ENCODE measurements at regions of chr13 and their contacts with region 1.

Region 1: GRCh38 chr13:27712421-27712820 is 79.9 kb upstream of the GSX1 start:
- DNase-seq: peak; percentile 39
- ATAC-seq: peak; percentile 40; the same call in 1 of the 2 replicates
- H3K4me3 ChIP-seq: no peak overlapping the region
- H3K27ac ChIP-seq: no peak overlapping the region
- H3K4me1 ChIP-seq: no peaks in the 10 kb centered on the region
- H3K27me3 ChIP-seq: 0 out of 2 replicates have a peak, but pooled peaks cover 3% of the 10 kb centered on the region
- CTCF ChIP-seq: peak; percentile 41; the same call in 1 of the 2 replicates

Region 2: DNA sequence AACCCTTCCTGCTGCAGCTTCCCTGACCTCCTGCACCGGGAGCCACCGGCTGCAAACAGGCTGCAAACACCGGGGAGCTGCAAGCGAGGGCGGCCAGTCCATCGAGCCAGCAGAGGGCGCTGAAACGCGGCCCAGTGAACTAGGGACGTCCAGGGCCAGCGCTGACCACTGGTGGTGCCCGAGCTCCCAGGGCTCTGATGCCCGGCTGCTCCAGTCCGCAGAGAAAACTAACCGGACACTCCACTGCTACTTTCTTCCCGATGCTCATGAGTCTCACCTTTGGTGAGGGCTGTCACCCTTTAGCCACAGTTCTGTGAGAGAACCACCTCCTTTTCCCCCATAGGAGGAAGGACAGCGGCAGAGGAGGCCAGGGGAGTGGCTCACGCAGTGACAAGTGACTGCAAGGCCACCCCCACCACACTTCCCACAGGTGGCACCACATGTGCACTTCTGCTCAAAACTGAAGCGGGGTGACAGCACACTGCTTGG is 179.2 kb before region 1 on chr13:
- CTCF ChIA-PET with region 1: interaction called, 10 read pairs
- POLR2A ChIA-PET with region 1: no interaction called
- intact Hi-C with region 1: loop called (anchors 1 kb)
- DNase-seq: peak; percentile 80
- ATAC-seq: peak; percentile 99
- H3K4me3 ChIP-seq: peak overlapping the region; percentile 53; the same call in 1 of the 2 replicates
- H3K27ac ChIP-seq: no peak overlapping the region
- H3K4me1 ChIP-seq: no peaks in the 10 kb centered on the region
- H3K27me3 ChIP-seq: no peaks in the 10 kb centered on the region
- CTCF ChIP-seq: peak; percentile 92

Region 3: DNA sequence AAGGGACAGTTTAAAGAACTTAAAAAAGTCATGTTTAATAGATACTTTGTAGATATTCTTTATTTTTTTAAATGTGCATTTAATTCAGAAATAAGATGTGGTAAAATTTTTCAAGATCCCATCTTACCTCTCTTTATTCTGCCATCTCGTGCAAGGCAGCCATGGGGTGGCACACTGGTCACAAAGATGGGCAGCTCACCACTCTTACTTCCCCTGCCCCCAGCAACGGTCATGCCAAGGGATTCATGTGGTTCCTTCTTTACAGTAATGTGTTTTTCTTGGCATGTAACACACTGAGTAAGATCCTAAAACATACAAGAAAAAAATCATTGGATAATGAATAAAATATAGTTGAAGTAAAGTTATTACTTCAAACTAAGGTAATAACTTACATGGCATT is 156.3 kb before region 1 on chr13:
- CTCF ChIA-PET with region 1: no interaction called
- POLR2A ChIA-PET with region 1: no interaction called
- intact Hi-C with region 1: loop called (anchors 5 kb)
- DNase-seq: peak; percentile 23
- ATAC-seq: peak; percentile 74
- H3K4me3 ChIP-seq: no peak overlapping the region
- H3K27ac ChIP-seq: no peak overlapping the region
- H3K4me1 ChIP-seq: no peaks in the 10 kb centered on the region
- H3K27me3 ChIP-seq: no peaks in the 10 kb centered on the region
- CTCF ChIP-seq: peak; percentile 45; the same call in 1 of the 2 replicates

Measured in PC-3 (cell line).